Right cardiac atrium (tissue), 5 donors: ENCODE measurements at regions of chr6 and their contacts with region 1.

Region 1: GRCh38 chr6:128899341-128900050 is 16.6 kb downstream of the LAMA2 start:
- DNase-seq: no peak
- ATAC-seq: no peak
- H3K4me3 ChIP-seq: no peak overlapping the region
- H3K27ac ChIP-seq: no peak overlapping the region
- H3K4me1 ChIP-seq: peaks cover 2% of the 10 kb centered on the region
- H3K27me3 ChIP-seq: no peaks in the 10 kb centered on the region

Region 2: GRCh38 chr6:129267028-129267427 is 367.5 kb after region 1 on chr6:
- intact Hi-C with region 1: loop called in 1 of 4 experiments (anchors 10 kb)
- DNase-seq: no peak
- ATAC-seq: peak in 1 of 2 donors; percentile 44
- H3K4me3 ChIP-seq: no peak overlapping the region
- H3K27ac ChIP-seq: no peak overlapping the region
- H3K4me1 ChIP-seq: no peaks in the 10 kb centered on the region
- H3K27me3 ChIP-seq: no peaks in the 10 kb centered on the region

Region 3: GRCh38 chr6:130525408-130525807 is 1625.9 kb after region 1 on chr6:
- intact Hi-C with region 1: no loop called
- DNase-seq: no peak
- ATAC-seq: no peak
- H3K4me3 ChIP-seq: no peak overlapping the region
- H3K27ac ChIP-seq: no peak overlapping the region
- H3K4me1 ChIP-seq: no peaks in the 10 kb centered on the region
- H3K27me3 ChIP-seq: no peaks in the 10 kb centered on the region